ENCODE measurements at regions of chr15 and their contacts with region 1.

Region 1: GRCh38 chr15:41501191-41501917 is 7.7 kb downstream of the ITPKA start:
- DNase-seq: peak in 5 of 9 donors; percentile 22 to 38 (median 25)
- ATAC-seq: peak; percentile 60
- H3K4me3 ChIP-seq: peak overlapping the region; percentile 55
- H3K4me3 Mint-ChIP-seq: peak overlapping the region; percentile 29 to 81 (median 77)
- H3K27ac ChIP-seq: no peak overlapping the region
- H3K27ac Mint-ChIP-seq: no peak overlapping the region
- H3K4me1 ChIP-seq: peaks cover 8 to 18% of the 10 kb centered on the region in 2 donors
- H3K4me1 Mint-ChIP-seq: peaks cover 0 to 26% (median 13%) of the 10 kb centered on the region in 7 donors
- H3K27me3 ChIP-seq: peaks cover 3 to 25% of the 10 kb centered on the region in 2 donors
- H3K27me3 Mint-ChIP-seq: peaks cover 46 to 80% (median 48%) of the 10 kb centered on the region in 5 donors

Region 2: DNA sequence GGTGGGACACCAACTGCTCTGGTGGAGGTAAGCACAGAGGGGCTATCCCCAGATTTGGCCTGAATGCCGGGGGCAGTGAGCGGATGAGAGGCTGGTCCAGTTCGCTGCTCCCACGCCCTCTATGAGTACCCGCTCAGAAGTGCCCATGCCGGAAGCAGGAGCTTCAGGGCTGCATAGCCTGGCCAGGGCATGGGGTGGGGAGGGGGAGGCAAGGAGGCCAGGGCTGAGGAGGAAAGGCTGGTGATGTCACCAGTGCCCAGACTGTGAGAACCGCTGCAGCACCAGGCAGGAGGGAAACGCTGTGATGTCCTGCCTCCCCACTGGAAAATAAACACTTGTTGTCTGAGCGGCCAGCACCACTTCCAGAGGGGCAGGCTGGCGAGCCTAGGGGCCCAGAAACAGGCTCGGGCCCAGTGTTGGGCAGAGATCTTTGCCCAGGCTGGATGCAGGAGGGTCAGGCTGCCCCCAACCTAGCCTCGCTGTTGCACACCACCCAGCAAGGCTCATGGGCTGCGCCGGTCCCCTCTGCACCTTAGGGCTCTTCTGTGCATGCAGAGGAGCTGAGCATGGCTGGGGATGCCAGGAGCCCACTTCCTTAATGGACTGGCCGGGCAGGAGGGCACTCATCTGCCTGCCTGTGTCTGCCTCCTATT is 583.1 kb before region 1 on chr15:
- CTCF ChIA-PET with region 1: no interaction called
- POLR2A ChIA-PET with region 1: no interaction called
- intact Hi-C with region 1: no loop called
- DNase-seq: no peak
- ATAC-seq: no peak
- H3K4me3 ChIP-seq: no peak overlapping the region
- H3K4me3 Mint-ChIP-seq: no peak overlapping the region
- H3K27ac ChIP-seq: no peak overlapping the region
- H3K27ac Mint-ChIP-seq: no peak overlapping the region
- H3K4me1 ChIP-seq: no peaks in the 10 kb centered on the region
- H3K4me1 Mint-ChIP-seq: no peaks in the 10 kb centered on the region
- H3K27me3 ChIP-seq: no peaks in the 10 kb centered on the region
- H3K27me3 Mint-ChIP-seq: peaks cover 0 to 13% (median 0%) of the 10 kb centered on the region in 5 donors

Region 3: GRCh38 chr15:41487381-41487780 is 14.0 kb before region 1 on chr15:
- CTCF ChIA-PET with region 1: no interaction called
- POLR2A ChIA-PET with region 1: no interaction called
- intact Hi-C with region 1: no loop called
- DNase-seq: no peak
- ATAC-seq: no peak
- H3K4me3 ChIP-seq: no peak overlapping the region
- H3K4me3 Mint-ChIP-seq: peak overlapping the region in 1 of 10 donors; percentile 33
- H3K27ac ChIP-seq: no peak overlapping the region
- H3K27ac Mint-ChIP-seq: peak overlapping the region in 1 of 9 donors; percentile 56
- H3K4me1 ChIP-seq: peaks cover 7 to 8% of the 10 kb centered on the region in 2 donors
- H3K4me1 Mint-ChIP-seq: peaks cover 7 to 52% (median 18%) of the 10 kb centered on the region in 7 donors
- H3K27me3 ChIP-seq: no peaks in the 10 kb centered on the region
- H3K27me3 Mint-ChIP-seq: peaks cover 3 to 18% (median 13%) of the 10 kb centered on the region in 5 donors

Region 4: DNA sequence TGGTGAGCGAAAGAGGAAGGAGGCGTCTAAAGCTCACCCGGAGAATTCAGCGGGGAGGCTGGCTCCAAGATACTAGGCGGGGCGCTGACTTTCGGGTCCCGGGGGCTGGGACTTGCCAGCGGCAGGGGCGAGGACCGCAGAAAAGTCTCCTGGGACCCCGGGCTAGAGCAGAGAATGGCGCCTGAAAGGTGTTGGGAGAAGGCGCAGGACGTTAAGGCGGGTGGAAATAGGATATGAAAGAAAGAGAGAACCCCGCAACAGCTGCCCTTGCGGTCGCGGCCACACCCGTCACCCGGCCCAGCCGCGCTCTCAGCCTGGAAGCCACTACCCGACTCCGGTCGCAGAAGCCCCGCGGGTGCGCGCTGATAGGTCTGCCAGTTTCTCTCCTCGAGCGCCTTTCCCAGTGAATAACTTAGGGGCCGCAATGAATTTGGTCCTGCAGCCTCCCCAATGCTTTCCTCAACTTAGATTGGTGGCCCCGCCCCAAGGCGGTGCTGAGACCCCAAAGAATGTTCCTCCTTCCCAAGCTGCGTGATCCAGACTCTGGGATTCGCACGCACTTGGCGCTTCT is 11.7 kb after region 1 on chr15:
- CTCF ChIA-PET with region 1: no interaction called
- POLR2A ChIA-PET with region 1: no interaction called
- intact Hi-C with region 1: loop called in 1 of 2 experiments (anchors 1 kb)
- DNase-seq: peak in 2 of 9 donors; percentile 33 to 34
- ATAC-seq: peak; percentile 63
- H3K4me3 ChIP-seq: peak overlapping the region; percentile 56
- H3K4me3 Mint-ChIP-seq: peak overlapping the region; percentile 48 to 84 (median 76)
- H3K27ac ChIP-seq: no peak overlapping the region
- H3K27ac Mint-ChIP-seq: no peak overlapping the region
- H3K4me1 ChIP-seq: peaks cover 9 to 22% of the 10 kb centered on the region in 2 donors
- H3K4me1 Mint-ChIP-seq: peaks cover 16 to 26% (median 24%) of the 10 kb centered on the region in 7 donors
- H3K27me3 ChIP-seq: peaks cover 8 to 18% of the 10 kb centered on the region in 2 donors
- H3K27me3 Mint-ChIP-seq: peaks cover 15 to 47% (median 17%) of the 10 kb centered on the region in 5 donors

Measured in naive thymus-derived CD4-positive, alpha-beta T cell (primary cell).